Right lobe of liver (tissue), 6 donors: ENCODE measurements at regions of chr12 and their contacts with region 1.

Region 1: DNA sequence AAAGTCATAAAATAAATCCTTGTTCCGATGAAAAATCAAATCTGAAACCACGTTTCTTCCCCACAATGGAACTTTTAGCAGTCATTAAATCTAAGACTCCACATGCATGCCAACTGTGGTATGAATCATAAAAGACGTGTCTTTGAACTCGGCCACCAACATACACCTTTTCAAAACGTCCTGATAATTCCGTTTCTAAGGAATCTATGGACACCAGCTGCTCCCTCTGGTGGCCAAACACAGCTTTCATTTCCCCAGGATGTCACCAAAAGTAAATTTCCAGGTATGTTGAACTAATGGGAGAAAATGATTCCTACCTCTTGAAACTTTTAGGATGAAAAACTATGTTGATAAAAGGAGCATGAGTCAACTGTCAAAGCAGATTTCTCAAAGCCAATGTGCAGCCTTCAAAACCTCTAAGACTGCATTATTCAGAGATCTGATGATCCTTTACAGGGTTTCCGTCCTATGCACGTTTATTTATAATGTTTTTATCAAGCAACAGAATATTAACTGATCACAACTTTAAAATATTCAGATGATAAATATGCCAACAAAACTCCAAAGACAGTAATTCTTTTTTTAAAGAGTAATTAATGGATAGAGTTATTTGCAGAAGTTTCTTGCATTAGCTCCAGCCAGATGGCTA is 96.2 kb downstream of the CIT start:
- DNase-seq: peak; percentile 54 to 60 (median 56)
- ATAC-seq: peak; percentile 86 to 94 (median 88)
- H3K4me3 ChIP-seq: no peak overlapping the region
- H3K27ac ChIP-seq: no peak overlapping the region
- H3K4me1 ChIP-seq: no peaks in the 10 kb centered on the region
- H3K27me3 ChIP-seq: no peaks in the 10 kb centered on the region
- CTCF ChIP-seq: peak; percentile 76 to 86 (median 82)
- POLR2A ChIP-seq: no peak

Region 2: DNA sequence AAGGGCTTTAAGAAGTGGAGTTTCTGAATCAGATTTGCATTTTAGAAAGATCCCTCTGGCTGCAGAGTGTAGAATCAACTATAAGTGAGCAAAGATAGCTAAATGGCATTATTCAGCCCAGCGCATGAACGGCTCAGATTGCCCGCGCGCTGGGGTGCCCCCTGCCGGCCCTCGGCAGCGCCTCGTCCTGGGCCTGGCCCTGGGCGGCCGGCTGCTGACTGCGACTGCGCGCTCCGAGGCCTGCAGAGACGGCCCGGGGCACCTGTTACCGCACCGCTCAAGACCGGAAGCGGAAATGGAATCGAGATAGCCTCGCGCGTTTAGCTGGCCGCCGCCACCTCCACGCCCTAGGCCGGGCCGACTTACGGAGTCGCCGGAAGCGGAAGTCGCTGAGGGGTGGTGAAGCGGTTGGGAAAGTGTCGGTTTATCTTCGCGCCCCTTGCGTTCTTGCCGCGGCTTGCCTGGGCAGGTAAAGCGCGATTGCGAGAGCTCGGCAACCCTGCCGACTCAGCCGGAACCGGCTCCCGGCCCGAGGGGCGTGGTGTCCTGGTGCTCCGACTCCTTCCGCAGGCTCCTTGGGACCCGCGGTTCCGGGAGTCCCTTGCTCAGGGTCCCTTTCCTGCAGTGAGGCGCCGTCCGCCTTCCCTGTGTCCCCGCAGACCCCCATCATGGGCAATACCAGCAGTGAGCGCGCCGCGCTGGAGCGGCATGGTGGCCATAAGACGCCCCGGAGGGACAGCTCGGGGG is 113.2 kb before region 1 on chr12 and contains the start of gene PRKAB1:
- intact Hi-C with region 1: loop called (anchors 10 kb)
- DNase-seq: peak; percentile 97 to 98 (median 98)
- ATAC-seq: peak; percentile 95 to 99 (median 96)
- H3K4me3 ChIP-seq: peak within 1 kb of the TSS; percentile 63 to 98 (median 97)
- H3K27ac ChIP-seq: peak within 1 kb of the TSS; percentile 67 to 87 (median 83)
- H3K4me1 ChIP-seq: peaks cover 0 to 41% (median 5%) of the 10 kb centered on the region in 4 donors
- H3K27me3 ChIP-seq: no peaks in the 10 kb centered on the region
- CTCF ChIP-seq: peak; percentile 89 to 99 (median 98)
- POLR2A ChIP-seq: peak; percentile 69
- total RNA-seq, gene PRKAB1: 8.2 to 17.1 (median 10.3) TPM